ENCODE measurements at regions of chr2 and their contacts with region 1.

Region 1: GRCh38 chr2:151437630-151438029 is 27.9 kb downstream of the RIF1 start:
- DNase-seq: no peak
- ATAC-seq: peak; percentile 74
- H3K4me3 ChIP-seq: no peak overlapping the region
- H3K27ac ChIP-seq: no peak overlapping the region
- H3K4me1 ChIP-seq: no peaks in the 10 kb centered on the region
- H3K27me3 ChIP-seq: no peaks in the 10 kb centered on the region
- CTCF ChIP-seq: peak in 2 of 3 experiments; percentile 16 to 43; a peak in 4 of 6 replicates
- EP300 ChIP-seq: no peak
- POLR2A ChIP-seq: no peak
- RAD21 ChIP-seq: peak; percentile 16; the same call in 1 of the 2 replicates

Region 2: GRCh38 chr2:151395509-151396374 is 41.9 kb before region 1 on chr2:
- CTCF ChIA-PET with region 1: no interaction called
- POLR2A ChIA-PET with region 1: no interaction called
- RAD21 ChIA-PET with region 1: no interaction called
- SMC1A ChIA-PET with region 1: no interaction called
- in situ Hi-C with region 1: no loop called
- intact Hi-C with region 1: no loop called
- DNase-seq: no peak
- ATAC-seq: peak; percentile 38
- H3K4me3 ChIP-seq: no peak overlapping the region
- H3K27ac ChIP-seq: no peak overlapping the region
- H3K4me1 ChIP-seq: no peaks in the 10 kb centered on the region
- H3K27me3 ChIP-seq: no peaks in the 10 kb centered on the region
- CTCF ChIP-seq: no peak
- EP300 ChIP-seq: no peak
- POLR2A ChIP-seq: no peak
- RAD21 ChIP-seq: no peak

Region 3: GRCh38 chr2:151422917-151423439 is 14.7 kb before region 1 on chr2:
- CTCF ChIA-PET with region 1: interaction called, 21 read pairs
- POLR2A ChIA-PET with region 1: no interaction called
- RAD21 ChIA-PET with region 1: interaction called, 5 read pairs
- SMC1A ChIA-PET with region 1: interaction called, 7 read pairs
- in situ Hi-C with region 1: no loop called
- intact Hi-C with region 1: no loop called
- DNase-seq: no peak
- ATAC-seq: peak; percentile 82
- H3K4me3 ChIP-seq: no peak overlapping the region; the same call in 1 of the 2 replicates
- H3K27ac ChIP-seq: peak overlapping the region; percentile 63
- H3K4me1 ChIP-seq: peaks cover 6% of the 10 kb centered on the region
- H3K27me3 ChIP-seq: no peaks in the 10 kb centered on the region
- CTCF ChIP-seq: no peak
- EP300 ChIP-seq: 0 out of 4 replicates have a peak, but pooled peaks of 1 of the 2 experiments have one; percentile 24
- POLR2A ChIP-seq: no peak
- RAD21 ChIP-seq: no peak